Dorsolateral prefrontal cortex (tissue), 120 donors: ENCODE measurements at regions of chr4 and their contacts with region 1.

Region 1: DNA sequence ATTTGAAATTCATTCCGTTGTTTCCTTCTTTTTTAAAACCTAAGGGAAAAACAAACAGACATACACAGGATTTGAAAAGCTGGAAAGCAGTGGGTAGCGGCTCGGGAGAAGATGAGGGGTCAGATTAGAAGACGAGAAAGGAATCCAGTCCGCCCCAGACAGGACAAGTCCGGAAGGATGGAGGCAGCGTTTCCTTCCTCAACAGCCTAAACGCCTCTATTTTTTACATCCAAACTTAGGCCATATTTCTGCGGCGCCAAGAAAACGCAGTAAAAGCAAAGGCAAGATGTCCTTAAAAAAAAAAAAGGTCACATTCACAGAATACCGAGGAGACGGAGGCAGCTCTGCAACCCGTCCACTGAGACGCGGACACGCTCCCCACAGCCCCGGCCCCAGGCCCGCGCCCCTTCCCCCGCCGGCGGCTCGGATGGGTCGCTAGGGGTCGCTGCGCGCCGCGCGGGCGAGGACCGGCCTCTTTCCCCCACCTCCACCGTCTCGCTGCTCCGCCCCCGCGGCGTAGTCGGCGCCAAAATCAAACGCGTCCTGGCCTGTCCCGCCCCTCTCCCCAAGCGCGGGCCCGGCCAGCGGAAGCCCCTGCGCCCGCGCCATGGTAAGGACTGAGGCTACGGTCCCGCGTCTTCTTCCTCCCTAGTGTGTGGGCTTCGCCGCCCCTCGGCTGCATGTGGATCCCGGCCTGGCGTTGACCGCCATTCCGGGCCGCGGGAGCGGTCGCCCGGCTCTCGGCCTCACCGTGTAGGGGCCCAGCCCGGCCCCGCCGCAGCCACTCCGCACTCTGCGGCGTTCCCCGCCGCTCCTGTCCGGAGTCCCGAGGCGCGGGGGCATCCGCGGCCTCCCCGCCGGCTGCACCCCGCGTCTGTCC is at the start of gene MND1:
- DNase-seq: peak; percentile 67 to 90 (median 82)
- H3K4me3 ChIP-seq: peak within 1 kb of the TSS; percentile 51 to 95 (median 80)
- H3K27ac ChIP-seq: peak within 1 kb of the TSS in 56 of 59 donors; percentile 9 to 89 (median 76)
- H3K27me3 ChIP-seq: no peaks in the 10 kb centered on the region
- CTCF ChIP-seq: peak; percentile 71 to 99 (median 95)
- total RNA-seq, gene MND1: 0.51 to 6.0 (median 1.5) TPM in 96 of 120 experiments, not detected in the others

Region 2: DNA sequence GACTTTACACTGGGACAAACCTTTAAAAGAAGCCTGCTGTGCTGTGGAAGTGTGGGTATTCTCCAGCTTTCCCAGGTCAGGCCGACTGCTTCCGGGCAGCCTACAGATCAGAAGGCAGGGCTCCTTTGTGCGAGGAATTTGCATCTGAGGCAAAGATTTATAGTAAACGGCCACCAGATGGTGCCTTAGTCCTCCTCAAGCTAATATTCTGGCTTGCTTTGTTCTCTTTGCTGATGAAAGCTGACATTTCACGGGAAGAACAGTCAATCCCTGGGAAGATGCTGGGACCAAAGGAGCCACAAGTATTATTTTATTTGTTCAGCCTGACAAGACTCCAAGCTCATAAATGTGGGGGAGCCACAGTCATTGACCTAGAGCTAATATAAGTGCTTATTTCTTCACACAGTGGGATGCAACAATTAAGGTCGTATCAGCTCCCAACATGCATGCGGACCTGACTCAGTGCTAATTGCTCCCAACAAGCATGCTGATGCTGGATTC is 260.9 kb before region 1 on chr4:
- intact Hi-C with region 1: loop called in 1 of 2 experiments (anchors 5 kb)
- DNase-seq: peak in 9 of 10 donors; percentile 42 to 74 (median 59)
- H3K4me3 ChIP-seq: peak overlapping the region in 4 of 59 donors; percentile 4 to 12 (median 6)
- H3K27ac ChIP-seq: peak overlapping the region in 57 of 59 donors; percentile 10 to 100 (median 97)
- H3K27me3 ChIP-seq: no peaks in the 10 kb centered on the region
- CTCF ChIP-seq: peak; percentile 60 to 93 (median 81)

Region 3: GRCh38 chr4:153393397-153393796 is 49.0 kb after region 1 on chr4:
- intact Hi-C with region 1: no loop called
- DNase-seq: no peak
- H3K4me3 ChIP-seq: no peak overlapping the region
- H3K27ac ChIP-seq: no peak overlapping the region
- H3K27me3 ChIP-seq: no peaks in the 10 kb centered on the region
- CTCF ChIP-seq: no peak

Region 4: GRCh38 chr4:153466081-153466948 is 121.9 kb after region 1 on chr4 and contains the start of gene TMEM131L:
- intact Hi-C with region 1: loop called (anchors 2 to 5 kb)
- DNase-seq: peak; percentile 13 to 84 (median 66)
- H3K4me3 ChIP-seq: peak within 1 kb of the TSS; percentile 57 to 90 (median 82)
- H3K27ac ChIP-seq: peak within 1 kb of the TSS in 58 of 59 donors; percentile 7 to 85 (median 72)
- H3K27me3 ChIP-seq: no peaks in the 10 kb centered on the region
- CTCF ChIP-seq: peak in 32 of 56 donors; percentile 3 to 43 (median 26)
- total RNA-seq, gene TMEM131L: 3.8 to 16.5 (median 8.7) TPM

Region 5: GRCh38 chr4:153643406-153644383 is 299.3 kb after region 1 on chr4:
- intact Hi-C with region 1: loop called in 1 of 2 experiments (anchors 10 kb)
- DNase-seq: no peak
- H3K4me3 ChIP-seq: peak overlapping the region in 2 of 59 donors; percentile 3 to 14
- H3K27ac ChIP-seq: no peak overlapping the region
- H3K27me3 ChIP-seq: no peaks in the 10 kb centered on the region
- CTCF ChIP-seq: peak in 46 of 56 donors; percentile 5 to 74 (median 45)

Region 6: DNA sequence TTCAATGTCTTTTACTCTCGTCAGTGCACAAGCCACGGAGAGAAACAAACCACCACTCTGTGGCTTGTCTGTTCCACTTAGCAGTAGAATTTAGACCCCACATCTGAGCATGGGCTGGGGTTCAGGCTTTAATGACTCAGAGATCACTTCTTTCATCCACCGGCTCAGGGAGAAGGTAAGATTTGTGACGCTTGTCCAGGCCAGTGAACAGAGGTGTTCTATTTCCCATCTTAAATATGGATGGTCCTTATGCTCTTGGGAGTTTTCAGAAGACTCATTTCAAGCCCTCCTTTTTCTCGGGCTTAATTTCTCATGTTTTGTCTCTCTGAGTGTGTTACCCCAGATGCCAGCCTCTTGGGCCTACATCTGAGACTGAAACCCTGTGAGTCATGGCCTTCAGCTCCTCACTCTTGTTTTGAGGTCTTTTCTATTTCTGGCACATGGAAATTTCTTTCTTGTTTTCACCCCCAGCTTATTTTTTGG is 571.9 kb after region 1 on chr4:
- intact Hi-C with region 1: no loop called
- DNase-seq: no peak
- H3K4me3 ChIP-seq: no peak overlapping the region
- H3K27ac ChIP-seq: no peak overlapping the region
- H3K27me3 ChIP-seq: peaks cover 0 to 3% (median 0%) of the 10 kb centered on the region in 45 donors
- CTCF ChIP-seq: no peak